ENCODE measurements at regions of chr2 and their contacts with region 1.

Region 1: GRCh38 chr2:70190418-70191243 is at the start of gene C2orf42:
- DNase-seq: peak; percentile 87 to 97 (median 96)
- ATAC-seq: peak; percentile 94
- H3K4me3 ChIP-seq: peak within 1 kb of the TSS; percentile 72
- H3K4me3 Mint-ChIP-seq: peak within 1 kb of the TSS; percentile 86 to 97 (median 93)
- H3K27ac ChIP-seq: peak within 1 kb of the TSS; percentile 93
- H3K27ac Mint-ChIP-seq: peak within 1 kb of the TSS; percentile 94 to 100 (median 99)
- H3K4me1 ChIP-seq: peaks cover 0 to 8% of the 10 kb centered on the region in 2 donors
- H3K4me1 Mint-ChIP-seq: peaks cover 7 to 24% (median 21%) of the 10 kb centered on the region in 7 donors
- H3K27me3 ChIP-seq: no peaks in the 10 kb centered on the region
- H3K27me3 Mint-ChIP-seq: peaks cover 0 to 2% (median 0%) of the 10 kb centered on the region in 5 donors
- total RNA-seq, gene C2orf42: 20.6 to 45.9 (median 30.3) TPM

Region 2: GRCh38 chr2:69436938-69437750 is 753.5 kb before region 1 on chr2 and contains the start of gene NFU1:
- CTCF ChIA-PET with region 1: interaction called, 3 read pairs
- POLR2A ChIA-PET with region 1: interaction called, 5 read pairs
- intact Hi-C with region 1: loop called (anchors 2 to 5 kb)
- DNase-seq: peak; percentile 76 to 89 (median 85)
- ATAC-seq: peak; percentile 91
- H3K4me3 ChIP-seq: peak within 1 kb of the TSS; percentile 68
- H3K4me3 Mint-ChIP-seq: peak within 1 kb of the TSS; percentile 92 to 100 (median 94)
- H3K27ac ChIP-seq: peak within 1 kb of the TSS; percentile 98
- H3K27ac Mint-ChIP-seq: peak within 1 kb of the TSS; percentile 97 to 100 (median 99)
- H3K4me1 ChIP-seq: peaks cover 18 to 21% of the 10 kb centered on the region in 2 donors
- H3K4me1 Mint-ChIP-seq: peaks cover 14 to 48% (median 40%) of the 10 kb centered on the region in 7 donors
- H3K27me3 ChIP-seq: no peaks in the 10 kb centered on the region
- H3K27me3 Mint-ChIP-seq: no peaks in the 10 kb centered on the region
- total RNA-seq, gene NFU1: 16.1 to 25.8 (median 22.6) TPM

Region 3: GRCh38 chr2:70070541-70071268 is 119.9 kb before region 1 on chr2:
- CTCF ChIA-PET with region 1: no interaction called
- POLR2A ChIA-PET with region 1: interaction called, 9 read pairs
- intact Hi-C with region 1: loop called (anchors 2 to 5 kb)
- DNase-seq: peak in 8 of 9 donors; percentile 49 to 80 (median 70)
- ATAC-seq: peak; percentile 85
- H3K4me3 ChIP-seq: peak overlapping the region; percentile 48
- H3K4me3 Mint-ChIP-seq: peak overlapping the region; percentile 56 to 91 (median 80)
- H3K27ac ChIP-seq: peak overlapping the region; percentile 71
- H3K27ac Mint-ChIP-seq: peak overlapping the region; percentile 89 to 99 (median 95)
- H3K4me1 ChIP-seq: peaks cover 35 to 36% of the 10 kb centered on the region in 2 donors
- H3K4me1 Mint-ChIP-seq: peaks cover 19 to 72% (median 63%) of the 10 kb centered on the region in 7 donors
- H3K27me3 ChIP-seq: no peaks in the 10 kb centered on the region
- H3K27me3 Mint-ChIP-seq: no peaks in the 10 kb centered on the region

Region 4: GRCh38 chr2:70124983-70125480 is 65.6 kb before region 1 on chr2:
- CTCF ChIA-PET with region 1: no interaction called
- POLR2A ChIA-PET with region 1: interaction called, 15 read pairs
- intact Hi-C with region 1: no loop called
- DNase-seq: peak in 6 of 9 donors; percentile 59 to 74 (median 70)
- ATAC-seq: peak; percentile 74
- H3K4me3 ChIP-seq: peak overlapping the region; percentile 92
- H3K4me3 Mint-ChIP-seq: peak overlapping the region; percentile 84 to 99 (median 96)
- H3K27ac ChIP-seq: peak overlapping the region; percentile 97
- H3K27ac Mint-ChIP-seq: peak overlapping the region; percentile 96 to 100 (median 99)
- H3K4me1 ChIP-seq: peaks cover 52 to 54% of the 10 kb centered on the region in 2 donors
- H3K4me1 Mint-ChIP-seq: peaks cover 46 to 82% (median 70%) of the 10 kb centered on the region in 7 donors
- H3K27me3 ChIP-seq: no peaks in the 10 kb centered on the region
- H3K27me3 Mint-ChIP-seq: no peaks in the 10 kb centered on the region

Region 5: GRCh38 chr2:70142590-70143313 is 47.9 kb before region 1 on chr2:
- CTCF ChIA-PET with region 1: interaction called, 4 read pairs
- POLR2A ChIA-PET with region 1: interaction called, 15 read pairs
- intact Hi-C with region 1: loop called (anchors 1 kb)
- DNase-seq: peak; percentile 99 to 100 (median 100)
- ATAC-seq: peak; percentile 85
- H3K4me3 ChIP-seq: peak overlapping the region; percentile 81
- H3K4me3 Mint-ChIP-seq: peak overlapping the region; percentile 83 to 96 (median 91)
- H3K27ac ChIP-seq: peak overlapping the region; percentile 97
- H3K27ac Mint-ChIP-seq: peak overlapping the region; percentile 97 to 99 (median 97)
- H3K4me1 ChIP-seq: peaks cover 27 to 39% of the 10 kb centered on the region in 2 donors
- H3K4me1 Mint-ChIP-seq: peaks cover 37 to 69% (median 55%) of the 10 kb centered on the region in 7 donors
- H3K27me3 ChIP-seq: no peaks in the 10 kb centered on the region
- H3K27me3 Mint-ChIP-seq: peaks cover 0 to 2% (median 0%) of the 10 kb centered on the region in 5 donors

Region 6: DNA sequence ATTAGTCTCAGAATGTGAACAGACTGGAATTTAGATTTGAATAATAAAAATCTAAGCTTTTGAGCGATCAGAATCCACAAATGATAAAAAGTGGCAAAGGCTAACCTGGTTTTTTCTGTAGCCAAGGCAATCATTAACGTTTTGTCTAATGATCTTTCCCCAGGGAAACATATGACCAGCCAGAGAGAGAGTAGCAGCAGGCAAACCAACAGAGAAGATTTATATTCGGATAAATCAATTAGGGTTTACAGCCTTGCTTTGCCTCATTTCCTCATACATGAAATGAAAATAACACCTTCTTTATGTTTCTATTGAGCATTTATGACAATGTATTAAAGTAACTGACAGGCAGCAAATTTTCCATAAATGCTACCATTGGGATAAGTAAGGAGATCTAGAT is 43.3 kb after region 1 on chr2:
- CTCF ChIA-PET with region 1: no interaction called
- POLR2A ChIA-PET with region 1: no interaction called
- intact Hi-C with region 1: no loop called
- DNase-seq: no peak
- ATAC-seq: no peak
- H3K4me3 ChIP-seq: no peak overlapping the region
- H3K4me3 Mint-ChIP-seq: no peak overlapping the region
- H3K27ac ChIP-seq: no peak overlapping the region
- H3K27ac Mint-ChIP-seq: peak overlapping the region in 1 of 9 donors; percentile 52
- H3K4me1 ChIP-seq: no peaks in the 10 kb centered on the region
- H3K4me1 Mint-ChIP-seq: peaks cover 0 to 5% (median 3%) of the 10 kb centered on the region in 7 donors
- H3K27me3 ChIP-seq: no peaks in the 10 kb centered on the region
- H3K27me3 Mint-ChIP-seq: no peaks in the 10 kb centered on the region

Region 7: DNA sequence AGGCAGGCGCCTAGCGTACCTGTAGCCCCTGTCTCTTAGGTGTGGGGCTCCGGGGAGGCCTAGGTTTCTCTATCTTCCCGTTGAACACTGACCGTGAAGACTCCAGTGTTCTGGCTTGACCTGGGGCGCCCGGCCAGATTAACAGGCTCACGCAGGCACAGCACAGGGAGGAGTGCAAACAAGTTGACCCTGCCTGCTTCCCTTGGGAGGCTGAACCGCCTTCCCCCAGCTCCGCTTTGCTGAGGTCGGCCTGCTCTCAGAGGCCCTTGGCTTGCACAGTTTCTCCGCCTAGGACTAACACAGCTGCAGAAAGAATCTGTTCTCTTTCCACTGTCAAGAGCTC is 67.9 kb after region 1 on chr2:
- CTCF ChIA-PET with region 1: no interaction called
- POLR2A ChIA-PET with region 1: interaction called, 23 read pairs
- intact Hi-C with region 1: loop called in 1 of 2 experiments (anchors 2 kb)
- DNase-seq: peak in 2 of 9 donors; percentile 7 to 16
- ATAC-seq: no peak
- H3K4me3 ChIP-seq: peak overlapping the region; percentile 56
- H3K4me3 Mint-ChIP-seq: peak overlapping the region; percentile 88 to 96 (median 92)
- H3K27ac ChIP-seq: peak overlapping the region; percentile 71
- H3K27ac Mint-ChIP-seq: peak overlapping the region; percentile 58 to 93 (median 86)
- H3K4me1 ChIP-seq: peaks cover 7 to 21% of the 10 kb centered on the region in 2 donors
- H3K4me1 Mint-ChIP-seq: peaks cover 19 to 50% (median 46%) of the 10 kb centered on the region in 7 donors
- H3K27me3 ChIP-seq: no peaks in the 10 kb centered on the region
- H3K27me3 Mint-ChIP-seq: no peaks in the 10 kb centered on the region

Measured in naive thymus-derived CD4-positive, alpha-beta T cell (primary cell).